Motor neuron (in vitro differentiated cells): ENCODE measurements at regions of chr15 and their contacts with region 1.

Region 1: DNA sequence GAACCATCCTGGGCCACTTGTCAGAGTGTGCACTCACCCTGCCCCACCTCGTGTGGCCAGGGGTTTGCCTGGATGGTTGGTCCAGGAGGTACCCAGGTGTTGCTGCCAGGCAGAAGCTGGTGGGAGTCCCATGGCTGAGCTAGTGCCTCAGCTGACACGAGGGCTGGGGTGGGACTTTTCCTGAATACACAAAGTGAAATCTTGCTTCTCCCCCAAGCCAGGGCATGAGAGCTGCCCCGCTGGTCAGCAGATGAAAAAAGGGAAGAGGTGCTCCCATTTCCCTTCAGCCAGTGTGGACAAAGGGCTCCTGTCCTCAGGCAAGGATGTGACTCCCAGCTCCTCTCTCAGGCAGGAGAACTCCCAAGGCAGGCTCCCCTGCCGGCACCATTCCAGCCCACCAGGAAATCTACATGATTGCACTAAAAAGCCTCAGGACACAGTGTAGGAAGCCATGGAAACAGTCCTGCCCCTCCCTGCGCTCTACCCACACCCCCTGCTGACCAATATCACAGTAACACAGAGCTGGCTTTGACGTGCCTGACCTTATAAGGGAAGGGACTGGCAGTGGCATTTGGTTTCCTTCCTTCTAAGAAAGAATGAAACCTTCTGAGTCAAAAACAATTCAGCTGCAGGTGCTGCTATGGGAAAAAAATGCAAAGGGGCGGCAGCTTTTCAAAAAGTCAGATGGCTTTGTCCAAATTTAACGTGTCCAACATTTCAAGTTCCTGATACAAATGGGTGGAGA is 33.9 kb downstream of the MYO5C start:
- ATAC-seq: peak; percentile 91 to 99 (median 97)
- H3K4me3 ChIP-seq: no peak overlapping the region
- H3K27ac ChIP-seq: peak overlapping the region in 1 of 2 donors; percentile 23
- H3K4me1 ChIP-seq: peaks cover 25 to 27% of the 10 kb centered on the region in 2 donors

Region 2: DNA sequence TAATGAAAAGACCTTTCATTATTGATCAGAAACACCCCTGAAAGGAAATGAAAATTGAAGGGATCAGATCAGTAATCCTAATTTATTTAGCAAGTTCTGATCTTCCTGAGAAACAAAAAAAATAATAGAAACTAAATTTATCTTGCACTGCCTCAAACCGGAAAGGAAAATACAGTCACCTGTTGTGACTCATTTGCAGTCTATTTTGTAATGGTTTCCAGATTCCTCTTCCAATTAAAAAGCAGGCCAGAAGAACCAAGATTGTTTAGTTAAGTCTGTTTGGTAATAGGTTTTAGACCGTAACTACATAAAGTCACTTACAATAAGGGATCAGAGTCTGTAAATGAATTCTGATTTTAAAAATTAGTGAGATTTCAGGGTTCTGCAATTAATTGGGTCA is 467.2 kb after region 1 on chr15:
- in situ Hi-C with region 1: loop called in 5 of 9 experiments (anchors 10 to 25 kb)
- ATAC-seq: no peak
- H3K4me3 ChIP-seq: no peak overlapping the region
- H3K27ac ChIP-seq: no peak overlapping the region
- H3K4me1 ChIP-seq: no peaks in the 10 kb centered on the region

Region 3: GRCh38 chr15:53716909-53717876 is 1455.5 kb after region 1 on chr15:
- in situ Hi-C with region 1: loop called in 1 of 9 experiments (anchors 25 kb)
- ATAC-seq: peak in 5 of 8 experiments; percentile 43 to 70 (median 56)
- H3K4me3 ChIP-seq: no peak overlapping the region
- H3K27ac ChIP-seq: no peak overlapping the region
- H3K4me1 ChIP-seq: peaks cover 0 to 8% of the 10 kb centered on the region in 2 donors